Panc1 (cell line): ENCODE measurements at regions of chr2 and their contacts with region 1.

Region 1: DNA sequence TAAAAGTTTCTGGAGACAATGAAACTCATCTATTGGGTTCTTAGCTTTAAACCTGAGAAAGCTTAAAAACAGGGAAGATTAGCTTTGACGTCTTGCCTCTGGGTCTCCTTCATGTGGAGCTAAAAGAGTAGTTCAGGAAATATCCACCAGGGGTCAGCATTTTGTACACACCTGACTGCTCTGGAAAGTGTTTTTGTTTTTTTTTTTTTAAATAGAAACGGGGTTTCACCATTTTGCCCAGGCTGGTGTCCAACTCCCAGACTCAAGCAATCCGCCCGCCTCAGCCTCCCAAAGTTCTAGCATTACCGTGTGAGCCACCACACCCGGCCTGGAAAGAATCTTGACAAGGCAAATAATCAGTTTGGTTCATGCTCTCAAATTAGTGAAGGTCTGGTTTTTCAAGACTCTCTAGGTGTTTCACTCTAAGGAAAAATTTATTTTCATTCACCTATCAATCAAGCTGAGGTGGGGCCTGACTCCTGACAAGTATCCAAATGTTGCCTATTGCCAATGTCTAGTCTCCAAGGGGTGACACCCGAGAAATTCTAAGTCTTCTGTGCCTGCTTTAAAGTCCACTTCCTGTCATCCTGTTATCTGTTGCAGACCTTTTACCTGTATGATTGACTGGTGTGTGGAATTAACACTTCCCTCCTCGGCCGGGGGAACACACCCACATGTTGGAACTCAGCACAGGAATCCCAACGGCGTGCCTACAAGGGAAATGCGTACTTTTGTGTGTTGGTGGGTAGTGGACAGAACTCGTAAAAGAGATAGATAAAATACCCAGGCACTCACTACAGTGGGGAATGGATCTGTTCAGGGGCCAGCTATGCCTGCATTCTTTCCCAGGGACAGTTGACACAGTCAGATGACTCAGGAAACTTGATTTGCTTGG is 11.3 kb downstream of the IL1RN start:
- DNase-seq: no peak
- ATAC-seq: peak; percentile 64; the same call in 1 of the 2 replicates
- H3K4me3 ChIP-seq: no peak overlapping the region
- H3K27ac ChIP-seq: no peak overlapping the region
- H3K4me1 ChIP-seq: no peaks in the 10 kb centered on the region
- H3K27me3 ChIP-seq: no peaks in the 10 kb centered on the region; the same call in 1 of the 2 replicates
- CTCF ChIP-seq: peak; percentile 87

Region 2: GRCh38 chr2:113198790-113199612 is 60.3 kb after region 1 on chr2:
- CTCF ChIA-PET with region 1: interaction called, 34 read pairs
- POLR2A ChIA-PET with region 1: interaction called, 4 read pairs
- in situ Hi-C with region 1: no loop called
- intact Hi-C with region 1: loop called (anchors 5 kb)
- DNase-seq: no peak
- ATAC-seq: peak; percentile 92
- H3K4me3 ChIP-seq: peak overlapping the region; percentile 74 to 75
- H3K27ac ChIP-seq: peak overlapping the region; percentile 73
- H3K4me1 ChIP-seq: no peaks in the 10 kb centered on the region; the same call in 1 of the 2 replicates
- H3K27me3 ChIP-seq: no peaks in the 10 kb centered on the region
- CTCF ChIP-seq: peak; percentile 99

Region 3: DNA sequence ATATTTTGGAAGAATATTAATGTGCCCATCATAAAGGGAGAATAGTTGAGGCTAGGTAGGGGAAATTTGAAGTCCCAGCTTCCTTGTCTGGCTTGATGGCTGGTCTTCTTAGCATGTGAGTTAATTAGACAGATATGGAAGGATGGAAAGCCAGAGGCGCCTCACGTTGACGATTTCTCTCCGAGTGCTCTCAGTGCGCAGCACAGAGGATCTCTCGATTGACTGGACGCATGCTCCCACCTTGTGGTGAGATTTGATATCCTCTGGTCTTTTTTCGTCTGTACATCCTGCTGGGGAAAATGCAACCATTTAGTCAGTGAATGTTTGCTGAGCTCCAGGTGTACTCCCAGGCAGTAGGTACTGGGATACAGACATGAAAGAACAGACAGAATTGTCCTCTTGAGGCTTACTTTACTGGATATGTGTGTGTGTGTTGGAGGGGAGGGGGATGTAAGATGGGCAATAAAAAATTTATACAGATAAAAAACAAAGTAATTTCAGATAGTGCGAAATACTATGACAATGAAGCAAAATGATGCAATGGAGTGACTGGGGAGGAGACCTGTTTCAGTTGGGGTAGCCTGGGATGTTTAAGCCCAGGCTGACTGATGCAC is 231.9 kb after region 1 on chr2:
- CTCF ChIA-PET with region 1: no interaction called
- POLR2A ChIA-PET with region 1: no interaction called
- in situ Hi-C with region 1: no loop called
- intact Hi-C with region 1: loop called (anchors 5 kb)
- DNase-seq: peak; percentile 61
- ATAC-seq: peak; percentile 98
- H3K4me3 ChIP-seq: no peak overlapping the region
- H3K27ac ChIP-seq: no peak overlapping the region
- H3K4me1 ChIP-seq: no peaks in the 10 kb centered on the region
- H3K27me3 ChIP-seq: no peaks in the 10 kb centered on the region
- CTCF ChIP-seq: peak; percentile 79

Region 4: GRCh38 chr2:113390124-113390849 is 251.6 kb after region 1 on chr2:
- CTCF ChIA-PET with region 1: interaction called, 16 read pairs
- POLR2A ChIA-PET with region 1: no interaction called
- in situ Hi-C with region 1: no loop called
- intact Hi-C with region 1: loop called (anchors 5 kb)
- DNase-seq: peak; percentile 81
- ATAC-seq: peak; percentile 81
- H3K4me3 ChIP-seq: no peak overlapping the region
- H3K27ac ChIP-seq: no peak overlapping the region
- H3K4me1 ChIP-seq: no peaks in the 10 kb centered on the region
- H3K27me3 ChIP-seq: no peaks in the 10 kb centered on the region
- CTCF ChIP-seq: peak; percentile 95